ENCODE measurements at regions of chr9 and their contacts with region 1.

Region 1: GRCh38 chr9:110192531-110193261 is 15.3 kb downstream of the C9orf152 start:
- DNase-seq: no peak
- ATAC-seq: peak in 6 of 8 donors; percentile 23 to 73 (median 47)
- H3K4me3 ChIP-seq: no peak overlapping the region
- H3K27ac ChIP-seq: peak overlapping the region in 8 of 10 donors; percentile 8 to 74 (median 53)
- H3K4me1 ChIP-seq: peaks cover 0 to 32% (median 0%) of the 10 kb centered on the region in 9 donors
- H3K27me3 ChIP-seq: no peaks in the 10 kb centered on the region
- CTCF ChIP-seq: no peak

Region 2: DNA sequence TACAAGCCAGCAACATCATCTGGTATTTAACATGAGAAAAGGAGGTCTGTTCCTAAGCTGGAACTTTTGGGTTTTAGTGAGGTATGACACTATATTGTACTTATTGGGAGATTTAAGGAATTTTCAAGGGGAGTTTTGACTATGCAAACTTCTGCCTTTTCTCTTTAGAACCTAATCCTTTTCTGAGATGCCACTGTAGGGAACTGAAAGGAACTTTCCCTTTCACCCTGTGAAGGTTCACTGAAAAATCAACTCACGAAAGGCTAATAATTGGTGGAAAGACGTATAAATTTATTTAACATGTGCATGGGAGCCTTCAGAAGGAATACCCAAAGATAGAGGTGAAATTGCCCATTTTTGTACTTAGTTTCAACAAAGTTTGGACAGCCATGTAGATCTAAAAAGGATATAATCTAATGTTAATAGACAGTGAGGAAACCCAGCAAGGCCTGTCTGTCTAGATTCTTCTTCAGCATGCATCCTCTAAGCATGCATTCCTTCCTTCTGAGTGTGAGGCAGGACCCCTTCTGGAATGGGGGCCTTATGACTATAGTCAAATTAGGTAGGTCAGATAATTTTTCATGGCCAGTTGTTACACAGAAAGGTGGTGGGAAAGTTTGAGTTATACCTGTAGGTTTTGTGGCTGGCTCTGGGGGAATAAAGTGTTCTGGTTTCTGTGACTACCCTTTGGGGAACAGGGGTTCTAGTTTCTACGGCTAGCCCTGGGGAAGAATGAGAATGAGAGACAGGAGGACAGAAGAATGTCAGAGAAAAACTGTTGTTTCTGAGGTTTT is 185.0 kb before region 1 on chr9:
- intact Hi-C with region 1: no loop called
- DNase-seq: no peak
- ATAC-seq: no peak
- H3K4me3 ChIP-seq: no peak overlapping the region
- H3K27ac ChIP-seq: no peak overlapping the region
- H3K4me1 ChIP-seq: no peaks in the 10 kb centered on the region
- H3K27me3 ChIP-seq: no peaks in the 10 kb centered on the region
- CTCF ChIP-seq: no peak

Region 3: GRCh38 chr9:110615498-110615897 is 422.8 kb after region 1 on chr9:
- intact Hi-C with region 1: loop called in 5 of 10 experiments (anchors 10 kb)
- DNase-seq: no peak
- ATAC-seq: no peak
- H3K4me3 ChIP-seq: no peak overlapping the region
- H3K27ac ChIP-seq: no peak overlapping the region
- H3K4me1 ChIP-seq: no peaks in the 10 kb centered on the region
- H3K27me3 ChIP-seq: no peaks in the 10 kb centered on the region
- CTCF ChIP-seq: no peak

Region 4: DNA sequence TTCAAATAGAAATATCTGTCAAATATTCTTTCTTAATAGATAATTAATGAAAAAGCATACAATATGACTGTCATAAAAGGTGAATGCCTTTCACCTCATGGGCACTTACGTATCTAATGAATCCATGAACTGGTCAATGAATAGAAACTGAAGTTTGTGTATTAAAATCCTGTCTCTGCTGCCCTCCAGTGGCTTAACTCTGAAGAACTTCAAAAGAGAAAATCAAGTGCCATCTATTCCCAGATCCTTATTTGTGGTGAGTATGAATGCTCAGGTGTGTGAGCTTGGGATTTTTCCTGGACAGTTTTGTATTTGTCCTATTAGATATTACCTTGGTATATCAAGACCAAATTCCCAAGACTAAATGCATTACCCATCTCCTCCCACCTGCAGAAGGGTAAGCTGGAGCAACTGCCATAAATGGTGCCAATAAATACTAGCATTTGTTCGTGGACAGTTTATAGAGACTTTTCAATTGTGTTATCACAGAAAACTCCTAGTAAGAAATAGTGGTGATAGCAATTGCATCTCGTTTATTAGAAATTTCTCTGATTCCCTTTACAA is 430.8 kb after region 1 on chr9:
- intact Hi-C with region 1: loop called in 5 of 10 experiments (anchors 10 kb)
- DNase-seq: peak in 1 of 2 donors; percentile 51
- ATAC-seq: peak in 2 of 8 donors; percentile 21 to 47
- H3K4me3 ChIP-seq: no peak overlapping the region
- H3K27ac ChIP-seq: no peak overlapping the region
- H3K4me1 ChIP-seq: no peaks in the 10 kb centered on the region
- H3K27me3 ChIP-seq: no peaks in the 10 kb centered on the region
- CTCF ChIP-seq: peak; percentile 44 to 78 (median 69)